ENCODE measurements at regions of chr19 and their contacts with region 1.

Region 1: DNA sequence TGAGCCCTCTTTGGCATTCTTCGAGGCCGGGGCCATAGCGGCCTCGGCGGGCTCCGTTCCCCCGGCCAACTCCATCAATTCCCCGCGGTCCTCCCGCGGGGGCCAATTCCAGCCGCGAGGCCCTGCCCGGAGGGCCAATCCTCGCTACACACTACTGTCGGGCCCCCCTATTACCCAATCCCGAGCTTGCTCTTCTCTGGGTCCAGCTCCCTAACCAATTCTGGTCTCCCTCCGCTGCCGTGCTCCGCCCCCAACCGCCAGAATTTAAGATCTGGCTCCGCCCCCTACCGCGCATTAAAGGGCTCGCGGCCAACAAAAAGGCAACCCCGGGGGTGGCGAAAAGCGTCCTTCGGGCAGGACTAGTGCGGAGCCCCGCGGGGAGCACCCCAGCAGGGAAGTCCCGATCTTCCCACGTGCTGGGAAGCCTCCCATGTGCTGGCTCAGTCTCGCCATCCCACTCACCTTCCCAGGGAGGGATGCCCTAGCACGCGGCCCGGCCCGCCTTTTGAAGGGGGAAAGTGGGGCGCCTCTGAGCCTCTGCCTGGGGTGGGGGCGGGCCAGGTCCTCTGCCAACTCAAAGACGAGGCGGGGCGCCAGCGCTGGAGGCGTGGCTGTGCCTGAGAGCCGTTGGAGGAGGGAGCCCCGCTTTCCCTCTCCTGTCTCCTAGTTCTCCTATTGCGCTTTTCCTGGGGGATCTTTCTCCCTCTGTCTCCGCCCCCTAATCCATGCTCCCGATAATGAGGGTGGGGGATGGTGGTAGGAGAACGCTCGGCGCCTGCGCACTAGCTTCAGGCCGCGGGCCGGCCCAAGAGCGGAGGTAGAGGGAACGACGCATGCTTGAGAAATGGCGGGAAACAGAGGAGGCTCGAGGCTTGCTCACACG is 3.5 kb downstream of the LIPE start:
- DNase-seq: peak; percentile 93
- ATAC-seq: peak; percentile 90
- H3K4me3 Mint-ChIP-seq: peak overlapping the region; percentile 82
- H3K27ac Mint-ChIP-seq: no peak overlapping the region
- H3K4me1 Mint-ChIP-seq: peaks cover 31% of the 10 kb centered on the region
- H3K27me3 Mint-ChIP-seq: peaks cover 98% of the 10 kb centered on the region
- CTCF ChIP-seq: no peak

Region 2: GRCh38 chr19:42396381-42397262 is 27.1 kb before region 1 on chr19:
- CTCF ChIA-PET with region 1: interaction called, 28 read pairs
- POLR2A ChIA-PET with region 1: interaction called, 13 read pairs
- DNase-seq: peak; percentile 100
- ATAC-seq: peak; percentile 94
- H3K4me3 Mint-ChIP-seq: peak overlapping the region; percentile 78
- H3K27ac Mint-ChIP-seq: peak overlapping the region; percentile 86
- H3K4me1 Mint-ChIP-seq: peaks cover 30% of the 10 kb centered on the region
- H3K27me3 Mint-ChIP-seq: peaks cover 30% of the 10 kb centered on the region
- CTCF ChIP-seq: no peak

Region 3: DNA sequence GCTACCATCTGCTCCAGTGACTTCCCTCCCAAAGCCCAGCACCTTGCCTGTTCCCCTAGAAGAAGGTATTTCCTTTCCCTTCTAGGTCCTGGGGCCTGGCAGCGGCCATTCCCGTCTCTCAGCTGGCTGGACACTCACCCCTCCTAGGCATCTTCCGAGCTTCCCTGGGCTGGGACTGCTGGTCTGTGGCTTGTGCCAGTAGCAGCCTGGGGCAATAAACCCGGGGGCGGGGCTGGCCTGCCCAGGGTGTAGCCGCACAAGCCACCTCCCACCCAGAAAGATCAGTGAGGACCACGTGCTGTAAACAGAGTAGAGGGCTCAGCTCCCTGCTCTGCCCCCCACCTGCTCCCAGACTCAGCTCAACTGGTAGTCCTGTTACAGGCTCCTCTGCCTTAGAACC is 11.5 kb before region 1 on chr19:
- CTCF ChIA-PET with region 1: interaction called, 10 read pairs
- POLR2A ChIA-PET with region 1: interaction called, 7 read pairs
- DNase-seq: peak; percentile 62
- ATAC-seq: peak; percentile 82
- H3K4me3 Mint-ChIP-seq: no peak overlapping the region
- H3K27ac Mint-ChIP-seq: no peak overlapping the region
- H3K4me1 Mint-ChIP-seq: peaks cover 15% of the 10 kb centered on the region
- H3K27me3 Mint-ChIP-seq: peaks cover 90% of the 10 kb centered on the region
- CTCF ChIP-seq: no peak

Measured in WTC11 (cell line).